Lower leg skin (tissue), 4 donors: ENCODE measurements at regions of chr21 and their contacts with region 1.

Region 1: DNA sequence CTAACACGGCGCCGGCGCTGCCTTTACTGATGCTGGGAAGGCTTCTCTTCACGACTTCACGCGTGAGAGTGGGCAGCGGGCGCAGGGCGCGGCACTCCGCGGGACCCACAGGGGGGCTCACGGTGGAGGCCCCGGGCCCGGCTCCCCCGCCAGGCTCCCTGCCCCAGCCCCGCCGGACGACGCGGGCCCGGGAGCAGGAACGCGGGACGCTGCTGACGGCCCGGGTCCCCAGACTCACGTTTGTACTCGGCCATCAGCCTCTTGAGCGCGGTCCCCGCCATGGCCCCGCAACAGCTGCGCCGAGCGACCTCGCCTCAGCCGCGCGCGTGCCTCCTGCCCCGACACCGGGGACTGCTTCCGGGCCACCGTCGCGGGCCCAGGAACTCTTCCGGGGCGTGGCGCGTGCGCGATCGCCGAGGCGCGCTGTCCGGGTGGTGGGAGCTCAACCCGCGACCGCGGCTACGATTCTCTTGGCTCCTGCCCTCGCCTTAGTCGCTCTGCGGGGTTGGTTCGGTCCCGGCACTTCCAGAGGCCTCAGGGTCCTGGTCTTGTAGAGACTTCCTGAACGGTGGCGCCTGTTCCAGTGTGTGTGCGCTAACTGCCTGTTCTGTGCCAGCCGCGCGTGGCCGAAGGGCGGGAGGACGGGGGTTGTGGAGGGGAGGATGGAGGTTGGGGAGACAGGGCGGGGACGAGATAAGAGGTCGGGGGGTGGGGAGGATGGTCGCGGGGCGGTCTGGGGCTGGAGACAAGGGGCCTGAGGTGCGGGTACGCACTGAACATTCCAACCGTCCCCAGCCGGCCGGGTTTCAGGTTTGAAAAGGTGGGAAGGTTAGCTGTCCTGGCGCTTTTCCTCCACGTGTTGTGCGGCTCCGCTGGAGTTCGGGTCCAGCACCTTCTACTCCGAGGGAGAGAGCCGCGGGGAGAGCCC is at the start of gene UBE2G2:
- DNase-seq: peak; percentile 64 to 96
- H3K4me3 ChIP-seq: peak within 1 kb of the TSS; percentile 76
- CTCF ChIP-seq: no peak
- POLR2A ChIP-seq: no peak
- total RNA-seq, gene UBE2G2: 37.2 to 61.8 (median 49.8) TPM

Region 2: DNA sequence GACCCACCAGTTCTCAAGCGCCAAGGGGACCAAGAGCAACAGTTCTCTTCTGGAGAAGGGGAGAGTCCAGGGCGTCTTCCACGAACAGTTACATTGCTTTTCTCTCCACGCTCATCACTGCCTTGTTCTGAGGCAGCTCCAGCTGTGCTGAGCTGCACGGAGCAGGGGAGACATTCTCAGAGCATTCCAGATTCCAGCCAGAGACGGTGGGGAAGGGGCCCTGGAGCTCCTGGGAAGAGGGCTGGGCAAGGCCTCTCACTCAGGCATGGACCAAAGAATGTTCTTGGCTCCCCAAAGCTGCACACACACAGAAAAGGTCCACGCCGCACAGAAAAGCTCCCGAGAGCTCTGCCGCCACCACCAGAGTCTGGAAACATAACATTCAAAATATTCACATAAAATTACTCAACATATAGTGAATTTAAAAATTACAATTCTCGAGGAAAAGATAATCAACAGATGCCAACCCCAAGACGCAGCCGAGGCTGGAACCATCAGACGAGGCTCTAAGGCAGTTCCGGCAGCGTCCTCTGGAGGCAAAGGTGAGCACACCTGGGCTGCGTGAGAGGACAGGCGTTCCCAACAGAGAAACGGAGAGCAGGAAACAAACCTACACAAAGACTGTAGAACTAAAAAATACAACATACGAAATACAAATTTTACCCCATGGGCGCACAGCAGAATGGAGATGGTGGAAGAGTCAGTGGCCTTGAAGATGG is 40.6 kb before region 1 on chr21:
- intact Hi-C with region 1: no loop called
- DNase-seq: no peak
- H3K4me3 ChIP-seq: no peak overlapping the region
- CTCF ChIP-seq: no peak
- POLR2A ChIP-seq: no peak

Region 3: DNA sequence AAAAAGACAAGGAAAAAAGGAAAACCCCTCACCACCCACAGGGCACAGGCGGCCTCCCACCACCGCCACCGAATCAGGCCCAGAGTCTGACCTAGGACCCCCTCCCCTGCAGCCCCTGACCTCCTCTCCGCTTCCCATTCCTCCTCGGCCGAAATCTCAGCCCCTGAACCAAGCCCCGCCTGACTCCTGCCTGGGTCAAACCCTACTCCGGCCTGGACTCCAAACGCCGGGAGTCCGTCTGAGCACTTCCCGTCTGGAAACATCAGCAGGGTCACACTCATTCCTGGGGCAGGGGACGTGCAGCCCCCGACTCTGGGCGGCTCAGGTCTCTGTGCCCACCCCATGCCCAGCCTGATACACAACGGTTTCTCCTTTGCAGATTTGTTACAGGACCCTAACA is 42.5 kb after region 1 on chr21:
- intact Hi-C with region 1: loop called (anchors 1 kb)
- DNase-seq: no peak
- H3K4me3 ChIP-seq: no peak overlapping the region
- CTCF ChIP-seq: no peak
- POLR2A ChIP-seq: no peak

Region 4: GRCh38 chr21:44939532-44940115 is 137.9 kb after region 1 on chr21 and contains the start of gene SLX9:
- intact Hi-C with region 1: loop called (anchors 10 kb)
- DNase-seq: no peak
- H3K4me3 ChIP-seq: peak within 1 kb of the TSS; percentile 89
- CTCF ChIP-seq: no peak
- POLR2A ChIP-seq: no peak
- total RNA-seq, gene SLX9: 19.0 to 36.4 (median 31.6) TPM

Region 5: GRCh38 chr21:45209046-45209445 is 407.3 kb after region 1 on chr21:
- intact Hi-C with region 1: no loop called
- DNase-seq: no peak
- H3K4me3 ChIP-seq: no peak overlapping the region
- CTCF ChIP-seq: no peak
- POLR2A ChIP-seq: no peak